SK-MEL-5 (cell line): ENCODE measurements at regions of chr3 and their contacts with region 1.

Region 1: GRCh38 chr3:11638495-11639358 is 5.0 kb downstream of the VGLL4 start:
- DNase-seq: no peak

Region 2: GRCh38 chr3:11385891-11386290 is 252.8 kb before region 1 on chr3:
- in situ Hi-C with region 1: loop called (anchors 10 kb)
- DNase-seq: no peak

Region 3: GRCh38 chr3:11438646-11439045 is 200.1 kb before region 1 on chr3:
- in situ Hi-C with region 1: no loop called
- DNase-seq: no peak

Region 4: DNA sequence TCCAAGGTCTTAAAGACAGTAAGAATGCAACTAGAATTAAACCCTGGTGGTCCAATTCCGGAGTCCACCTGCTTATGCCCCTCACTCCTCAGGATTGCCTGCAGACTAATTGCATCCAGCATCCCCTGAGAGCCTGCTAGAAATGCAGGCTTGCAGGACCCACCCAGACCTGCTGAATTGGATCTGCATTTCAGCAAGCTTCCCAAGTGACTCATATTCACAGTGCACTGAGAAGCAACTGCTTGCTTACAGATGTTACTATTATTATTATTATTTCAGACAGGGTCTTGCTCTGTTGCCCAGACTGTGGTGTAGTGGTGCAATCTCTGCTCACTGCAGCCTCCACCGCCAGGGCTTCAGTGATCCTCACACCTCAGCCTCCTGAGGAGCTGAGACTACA is 88.5 kb after region 1 on chr3:
- in situ Hi-C with region 1: no loop called
- DNase-seq: no peak

Region 5: GRCh38 chr3:11770477-11771391 is 132.0 kb after region 1 on chr3:
- in situ Hi-C with region 1: no loop called
- DNase-seq: peak; percentile 71